Heart left ventricle (tissue), 16 donors: ENCODE measurements at regions of chr4 and their contacts with region 1.

Region 1: DNA sequence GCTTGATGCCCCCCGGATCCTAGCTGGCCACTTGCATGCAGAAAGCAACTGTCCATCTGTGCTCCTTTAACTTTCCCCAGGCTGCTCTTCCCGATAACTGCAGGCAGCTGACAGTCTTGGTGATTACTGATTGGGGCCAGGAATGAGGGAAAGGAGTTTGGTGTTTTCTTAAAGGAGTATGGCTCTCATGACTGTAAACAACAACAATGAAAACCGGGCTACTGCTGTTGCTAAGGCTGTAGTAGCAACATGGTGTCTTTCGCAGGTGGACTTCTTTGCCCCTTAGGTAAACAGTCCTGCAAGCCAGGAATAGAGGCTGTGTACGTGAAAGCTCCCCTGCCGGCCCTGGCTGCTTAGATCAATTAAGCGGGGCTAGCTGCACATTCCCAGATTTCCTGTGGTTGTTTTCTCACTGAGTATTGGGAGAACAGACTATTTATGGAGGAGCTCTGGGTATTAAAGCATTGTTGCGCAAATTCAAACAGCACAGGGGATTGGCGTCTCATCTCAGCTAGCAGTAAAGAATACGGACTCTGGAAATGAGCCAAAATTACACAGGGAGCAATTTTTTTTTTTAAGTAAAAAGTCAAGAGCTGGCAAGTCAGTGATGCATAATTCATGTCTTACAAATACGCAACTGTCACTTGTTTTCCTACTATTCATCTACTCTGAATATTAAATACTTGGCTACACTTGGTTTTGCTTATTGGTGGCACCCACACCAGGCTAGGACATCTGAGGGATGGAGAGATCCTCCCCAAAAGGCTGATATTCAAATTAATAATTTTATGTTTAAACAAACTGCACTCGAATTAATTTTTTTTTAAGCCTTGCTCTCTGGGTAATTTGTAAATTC is 61.6 kb upstream of the NAP1L5 start:
- DNase-seq: no peak
- ATAC-seq: peak; percentile 28 to 63 (median 52)
- H3K4me3 ChIP-seq: peak overlapping the region in 9 of 12 donors; percentile 6 to 45 (median 30)
- H3K27ac ChIP-seq: peak overlapping the region in 10 of 12 donors; percentile 4 to 49 (median 15)
- H3K4me1 ChIP-seq: peaks cover 0 to 37% (median 22%) of the 10 kb centered on the region in 12 donors
- H3K27me3 ChIP-seq: no peaks in the 10 kb centered on the region
- CTCF ChIP-seq: no peak
- POLR2A ChIP-seq: no peak

Region 2: GRCh38 chr4:88720451-88721428 is 38.5 kb before region 1 on chr4:
- intact Hi-C with region 1: loop called in 1 of 10 experiments (anchors 5 kb)
- DNase-seq: no peak
- ATAC-seq: peak in 2 of 4 donors; percentile 12 to 25
- H3K4me3 ChIP-seq: no peak overlapping the region
- H3K27ac ChIP-seq: peak overlapping the region in 6 of 12 donors; percentile 13 to 54 (median 24)
- H3K4me1 ChIP-seq: peaks cover 0 to 48% (median 28%) of the 10 kb centered on the region in 12 donors
- H3K27me3 ChIP-seq: no peaks in the 10 kb centered on the region
- CTCF ChIP-seq: no peak
- POLR2A ChIP-seq: no peak

Region 3: DNA sequence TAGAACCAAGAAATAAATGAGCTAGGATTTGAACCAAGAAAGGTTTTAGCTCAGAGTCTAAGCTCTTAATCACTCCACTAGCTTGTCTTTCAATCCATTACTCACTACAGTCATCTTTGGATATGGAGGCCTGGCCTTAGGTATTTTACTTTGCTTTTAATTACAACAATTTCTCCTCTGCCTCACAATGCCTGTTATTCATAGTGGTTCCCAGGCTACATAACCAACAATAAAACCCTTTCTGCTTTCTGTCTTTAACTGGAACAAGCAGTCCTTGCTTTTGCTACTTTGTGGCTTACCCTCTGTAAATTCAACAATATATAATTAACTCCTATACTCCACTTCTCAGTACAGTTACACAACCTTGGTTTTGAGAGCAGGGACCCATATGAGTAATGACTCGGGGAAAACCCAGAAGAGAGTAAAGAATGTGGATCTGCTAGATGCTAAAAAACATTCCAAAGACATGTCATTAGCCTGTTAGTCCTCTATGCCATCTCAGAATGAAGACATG is 33.1 kb after region 1 on chr4:
- intact Hi-C with region 1: no loop called
- DNase-seq: no peak
- ATAC-seq: no peak
- H3K4me3 ChIP-seq: no peak overlapping the region
- H3K27ac ChIP-seq: no peak overlapping the region
- H3K4me1 ChIP-seq: peaks cover 0 to 19% (median 0%) of the 10 kb centered on the region in 12 donors
- H3K27me3 ChIP-seq: no peaks in the 10 kb centered on the region
- CTCF ChIP-seq: no peak
- POLR2A ChIP-seq: no peak

Region 4: DNA sequence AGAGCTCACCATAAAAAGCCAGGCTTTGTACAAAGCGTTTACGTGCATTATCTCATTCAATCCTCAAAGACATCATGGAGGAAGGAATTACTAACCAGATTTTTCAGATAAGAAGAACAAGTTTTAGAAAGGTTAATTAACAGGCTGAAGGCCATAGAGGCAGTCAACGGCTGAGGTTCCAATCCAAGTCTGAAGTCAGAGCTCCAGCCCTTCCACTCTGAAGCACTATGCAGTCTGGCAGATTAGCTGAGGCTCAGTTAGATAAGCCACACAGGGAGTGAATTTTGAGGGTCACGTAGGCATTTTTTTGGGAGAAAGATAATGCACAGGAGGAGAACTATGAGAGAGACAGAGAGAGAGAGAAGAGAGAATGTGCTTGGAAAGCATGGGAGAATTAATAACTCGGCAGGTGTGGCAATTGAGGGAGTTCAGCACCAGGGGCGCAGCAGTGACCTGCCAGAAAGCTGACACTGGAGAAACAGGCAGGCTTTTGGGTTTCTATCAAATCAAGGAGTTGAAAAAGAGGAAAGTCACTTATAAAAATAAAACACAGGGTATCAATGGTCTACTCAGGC is 54.9 kb after region 1 on chr4:
- intact Hi-C with region 1: no loop called
- DNase-seq: no peak
- ATAC-seq: peak in 2 of 4 donors; percentile 19 to 39
- H3K4me3 ChIP-seq: no peak overlapping the region
- H3K27ac ChIP-seq: no peak overlapping the region
- H3K4me1 ChIP-seq: peaks cover 0 to 76% (median 48%) of the 10 kb centered on the region in 12 donors
- H3K27me3 ChIP-seq: no peaks in the 10 kb centered on the region
- CTCF ChIP-seq: peak in 2 of 12 donors; percentile 9 to 11
- POLR2A ChIP-seq: no peak

Region 5: DNA sequence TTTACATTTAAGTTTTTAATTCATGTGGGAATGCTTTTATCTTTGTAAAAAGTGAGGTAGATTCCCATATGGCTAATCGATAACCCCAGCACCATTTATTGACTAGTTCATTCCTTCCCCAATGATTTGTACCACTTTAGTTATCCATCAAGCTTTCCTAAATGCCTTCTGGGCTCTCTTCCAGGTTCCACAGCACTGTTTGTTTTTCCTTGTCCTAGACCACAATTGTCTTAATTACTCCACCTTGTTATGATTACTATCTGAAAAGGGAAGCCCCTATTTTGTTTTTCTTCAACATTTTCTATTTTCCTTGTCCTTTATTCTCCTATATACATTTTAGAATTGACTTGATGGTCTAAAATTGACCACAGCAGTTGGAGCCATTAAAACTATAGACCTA is 596.8 kb after region 1 on chr4:
- intact Hi-C with region 1: no loop called
- DNase-seq: no peak
- ATAC-seq: no peak
- H3K4me3 ChIP-seq: no peak overlapping the region
- H3K27ac ChIP-seq: no peak overlapping the region
- H3K4me1 ChIP-seq: no peaks in the 10 kb centered on the region
- H3K27me3 ChIP-seq: no peaks in the 10 kb centered on the region
- CTCF ChIP-seq: no peak
- POLR2A ChIP-seq: no peak